ENCODE measurements at regions of chr11 and their contacts with region 1.

Region 1: DNA sequence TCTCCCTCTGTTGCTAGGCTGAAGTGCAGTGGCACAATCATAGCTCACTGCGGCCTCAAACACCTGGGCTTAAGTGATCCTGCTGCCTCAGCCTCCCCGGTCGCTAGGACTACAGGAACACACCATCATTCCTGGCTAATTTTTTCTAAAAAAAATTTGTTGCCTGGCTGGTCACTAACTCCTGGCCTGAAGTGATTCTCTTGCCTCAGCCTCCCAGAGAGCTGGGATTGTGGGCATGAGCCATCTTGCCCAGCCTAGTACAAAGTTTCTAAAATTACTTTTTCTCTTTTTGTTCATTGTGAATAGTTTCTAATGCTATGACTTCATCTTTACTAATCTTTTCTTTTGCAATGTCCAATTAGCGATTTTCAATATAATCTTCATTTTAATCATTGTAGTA is 12.5 kb downstream of the RBM7 start:
- DNase-seq: no peak
- H3K4me3 ChIP-seq: no peak overlapping the region
- H3K27ac ChIP-seq: no peak overlapping the region
- H3K4me1 ChIP-seq: peaks cover 0 to 3% (median 2%) of the 10 kb centered on the region in 4 experiments; a peak in 5 of 7 replicates
- H3K27me3 ChIP-seq: no peaks in the 10 kb centered on the region
- CTCF ChIP-seq: no peak
- EP300 ChIP-seq: no peak
- POLR2A ChIP-seq: no peak
- RAD21 ChIP-seq: no peak

Region 2: DNA sequence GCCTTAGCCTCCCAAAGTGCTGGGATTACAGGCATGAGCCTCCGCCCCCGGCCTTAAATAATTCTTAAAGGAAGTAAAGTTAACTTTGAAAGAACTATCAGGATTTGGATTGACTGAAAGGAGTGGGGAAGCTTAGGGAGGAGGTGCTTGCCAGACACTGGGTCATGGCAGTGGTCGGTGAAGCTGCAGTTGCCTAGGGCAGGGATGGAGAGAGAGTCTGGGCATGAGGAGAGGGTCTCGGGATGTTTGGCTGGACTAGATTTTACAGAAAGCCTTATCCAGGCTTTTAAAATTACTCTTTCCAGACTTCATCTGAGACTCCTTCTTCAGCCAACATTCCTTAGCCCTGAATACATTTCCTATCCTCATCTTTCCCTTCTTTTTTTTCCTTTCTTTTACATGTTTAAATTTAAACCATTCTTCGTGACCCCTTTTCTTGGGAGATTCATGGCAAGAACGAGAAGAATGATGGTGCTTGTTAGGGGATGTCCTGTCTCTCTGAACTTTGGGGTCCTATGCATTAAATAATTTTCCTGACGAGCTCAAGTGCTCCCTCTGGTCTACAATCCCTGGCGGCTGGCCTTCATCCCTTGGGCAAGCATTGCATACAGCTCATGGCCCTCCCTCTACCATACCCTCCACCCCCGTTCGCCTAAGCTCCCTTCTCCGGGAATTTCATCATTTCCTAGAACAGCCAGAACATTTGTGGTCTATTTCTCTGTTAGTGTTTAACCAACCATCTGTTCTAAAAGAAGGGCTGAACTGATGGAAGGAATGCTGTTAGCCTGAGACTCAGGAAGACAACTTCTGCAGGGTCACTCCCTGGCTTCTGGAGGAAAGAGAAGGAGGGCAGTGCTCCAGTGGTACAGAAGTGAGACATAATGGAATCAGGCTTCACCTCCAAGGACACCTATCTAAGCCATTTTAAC is 117.0 kb before region 1 on chr11 and contains the start of gene NNMT:
- CTCF ChIA-PET with region 1: no interaction called
- POLR2A ChIA-PET with region 1: no interaction called
- DNase-seq: no peak
- H3K4me3 ChIP-seq: no peak within 1 kb of the TSS
- H3K27ac ChIP-seq: no peak within 1 kb of the TSS
- H3K4me1 ChIP-seq: no peaks in the 10 kb centered on the region
- H3K27me3 ChIP-seq: no peaks in the 10 kb centered on the region
- CTCF ChIP-seq: no peak
- EP300 ChIP-seq: no peak
- POLR2A ChIP-seq: no peak
- RAD21 ChIP-seq: no peak
- total RNA-seq, gene NNMT: not detected in 2 replicates

Region 3: DNA sequence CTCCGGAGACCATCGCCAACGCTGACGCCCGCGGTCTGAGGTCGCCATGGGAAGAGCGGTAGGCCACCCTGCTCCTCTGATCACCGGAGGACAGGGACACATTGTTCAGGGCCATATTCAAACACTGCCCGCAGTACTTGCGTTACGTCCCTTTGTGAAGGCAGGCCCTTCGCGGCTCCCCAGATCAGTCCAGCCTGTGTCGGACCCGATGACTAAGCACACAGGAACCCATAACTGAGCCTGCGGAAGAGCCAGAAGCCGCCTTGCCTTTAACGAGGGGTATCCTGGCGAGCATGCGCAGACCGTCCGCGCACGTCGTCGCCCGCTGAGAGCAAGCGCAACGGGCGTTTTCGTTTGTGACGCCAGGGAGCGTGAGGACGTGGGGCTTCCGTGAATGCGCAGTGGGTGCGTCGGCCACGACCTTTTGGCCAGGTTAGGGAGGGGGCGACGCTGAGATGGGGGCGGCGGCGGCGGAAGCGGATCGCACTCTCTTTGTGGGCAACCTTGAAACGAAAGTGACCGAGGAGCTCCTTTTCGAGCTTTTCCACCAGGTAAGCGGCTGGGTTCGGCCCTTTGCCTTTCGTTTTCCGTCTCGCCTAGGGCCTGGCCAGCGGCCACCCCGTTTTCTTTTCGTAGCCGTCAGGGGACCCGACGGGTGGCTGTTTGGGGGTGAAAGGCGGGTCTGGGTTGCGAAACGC is 12.6 kb before region 1 on chr11 and contains the starts of genes C11orf71 and RBM7:
- CTCF ChIA-PET with region 1: interaction called, 3 read pairs
- POLR2A ChIA-PET with region 1: interaction called, 14 read pairs
- DNase-seq: peak; percentile 95
- H3K4me3 ChIP-seq: peak within 1 kb of the TSS; percentile 83 to 94 (median 90)
- H3K27ac ChIP-seq: peak within 1 kb of the TSS; percentile 99
- H3K4me1 ChIP-seq: no peaks in the 10 kb centered on the region; a peak in 1 of 7 replicates
- H3K27me3 ChIP-seq: no peaks in the 10 kb centered on the region
- CTCF ChIP-seq: no peak
- EP300 ChIP-seq: no peak; a peak in 1 of 3 replicates
- POLR2A ChIP-seq: peak in 1 of 2 experiments; percentile 98; a peak in 2 of 3 replicates
- RAD21 ChIP-seq: peak in 1 of 2 experiments; percentile 5; a peak in 1 of 4 replicates
- total RNA-seq, gene C11orf71: 5.4 and 5.8 TPM in 2 replicates
- total RNA-seq, gene RBM7: 45.7 and 48.3 TPM in 2 replicates

Region 4: DNA sequence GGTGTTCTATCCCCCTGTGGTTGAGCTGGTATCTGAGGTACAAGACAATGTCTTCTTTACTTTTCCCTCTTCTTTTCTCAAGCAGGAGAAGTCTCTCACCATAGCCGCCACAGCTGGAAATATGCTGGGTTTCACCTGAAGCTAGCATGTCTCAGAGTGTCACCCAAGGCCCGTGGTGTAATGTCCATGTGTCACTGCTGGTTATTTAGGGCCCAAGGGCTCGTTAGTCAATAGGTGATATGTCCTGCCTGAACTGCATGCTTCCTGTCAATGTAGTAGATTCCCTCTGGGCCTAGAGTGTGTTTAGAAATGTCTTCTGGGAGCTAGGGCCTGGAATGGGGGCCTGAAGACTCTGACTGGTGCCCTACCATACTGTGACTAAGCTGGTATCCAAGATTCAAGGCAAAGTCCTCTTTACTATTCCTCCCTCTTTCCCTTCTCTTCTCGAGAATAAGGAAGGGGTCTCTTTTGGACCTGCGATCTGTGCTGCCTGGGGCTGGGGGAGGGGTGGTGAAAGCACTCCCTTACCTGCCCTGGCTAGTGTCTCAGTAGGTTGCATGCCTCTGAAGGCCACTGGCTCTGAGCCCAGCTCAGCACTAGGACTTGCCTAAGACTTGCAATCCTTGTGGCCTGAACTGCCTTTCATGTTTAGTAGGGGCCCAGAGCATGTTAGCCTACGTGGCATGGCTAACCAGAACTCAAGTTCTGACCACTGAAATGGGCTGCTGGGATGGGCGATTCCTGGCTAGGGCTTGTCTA is 13.2 kb after region 1 on chr11:
- CTCF ChIA-PET with region 1: interaction called, 6 read pairs
- POLR2A ChIA-PET with region 1: interaction called, 11 read pairs
- DNase-seq: no peak
- H3K4me3 ChIP-seq: no peak overlapping the region
- H3K27ac ChIP-seq: no peak overlapping the region
- H3K4me1 ChIP-seq: peaks cover 0 to 2% (median 0%) of the 10 kb centered on the region in 4 experiments; a peak in 2 of 7 replicates
- H3K27me3 ChIP-seq: no peaks in the 10 kb centered on the region
- CTCF ChIP-seq: no peak
- EP300 ChIP-seq: no peak
- POLR2A ChIP-seq: no peak
- RAD21 ChIP-seq: no peak

Region 5: DNA sequence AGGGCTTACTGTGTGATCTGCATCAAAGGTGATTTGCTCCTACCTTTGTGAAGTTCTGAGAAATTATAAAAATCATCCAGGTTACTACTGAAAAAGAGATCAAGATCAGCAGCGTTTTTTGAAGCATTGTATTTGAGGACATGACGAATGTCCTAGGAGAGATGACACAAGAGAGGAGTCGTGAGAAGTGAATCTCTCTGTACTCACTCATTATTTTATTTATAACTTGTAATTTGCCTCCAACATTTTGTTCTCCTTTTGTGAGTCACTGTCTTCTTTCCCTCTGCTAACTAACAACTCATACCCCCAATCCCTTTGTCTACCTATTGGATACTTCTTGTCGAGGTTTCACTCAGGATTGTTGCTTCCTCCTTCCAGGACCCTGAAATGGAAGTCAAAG is 138.1 kb after region 1 on chr11:
- CTCF ChIA-PET with region 1: no interaction called
- POLR2A ChIA-PET with region 1: no interaction called
- DNase-seq: no peak
- H3K4me3 ChIP-seq: no peak overlapping the region
- H3K27ac ChIP-seq: no peak overlapping the region
- H3K4me1 ChIP-seq: no peaks in the 10 kb centered on the region
- H3K27me3 ChIP-seq: no peaks in the 10 kb centered on the region
- CTCF ChIP-seq: no peak
- EP300 ChIP-seq: no peak
- POLR2A ChIP-seq: no peak
- RAD21 ChIP-seq: no peak